GM10248 (cell line): ENCODE measurements at regions of chr6 and their contacts with region 1.

Region 1: DNA sequence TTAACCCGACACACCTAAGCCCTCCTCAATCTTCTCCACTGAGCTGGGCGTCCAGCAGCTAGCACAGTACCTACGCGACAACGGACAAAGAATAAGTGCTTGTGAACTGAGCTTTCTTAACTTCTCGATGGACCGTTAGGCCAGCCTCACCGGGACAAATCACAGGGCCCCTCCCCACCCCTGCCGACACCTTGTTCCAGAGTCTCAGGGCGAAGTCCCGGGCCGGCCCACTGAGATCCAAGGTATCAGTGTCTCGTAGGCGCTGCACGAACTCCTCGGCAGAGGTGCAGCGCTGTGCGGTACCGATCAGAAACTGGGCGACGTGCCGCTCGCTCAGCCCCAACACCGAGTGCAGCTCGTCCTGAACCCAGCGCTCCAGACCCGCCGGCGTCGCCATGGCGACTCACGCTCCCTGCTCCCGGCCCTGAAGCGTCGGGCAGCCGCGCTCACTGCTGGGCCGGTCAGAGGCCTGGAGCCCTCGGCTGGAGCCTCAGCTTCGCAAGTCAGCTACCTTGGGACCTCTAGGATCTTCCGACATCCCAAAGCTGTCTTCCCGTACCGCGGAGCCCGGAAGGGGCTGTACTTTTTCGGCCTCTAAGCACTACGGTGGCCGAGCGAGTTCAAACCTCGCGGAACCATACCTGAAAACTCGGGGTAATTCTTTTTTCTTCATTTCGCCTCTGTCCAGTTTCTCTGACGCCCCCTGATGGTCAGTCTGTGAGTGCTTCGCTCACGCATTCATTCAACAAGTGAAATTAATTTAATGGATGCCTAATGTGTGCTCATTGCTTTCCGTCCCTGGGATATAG is at the start of gene DHX16:
- DNase-seq: peak; percentile 92
- CTCF ChIP-seq: peak; percentile 91

Region 2: GRCh38 chr6:30571075-30571768 is 101.4 kb before region 1 on chr6 and contains the start of gene ABCF1:
- CTCF ChIA-PET with region 1: no interaction called
- POLR2A ChIA-PET with region 1: no interaction called
- DNase-seq: peak; percentile 99
- CTCF ChIP-seq: no peak

Region 3: DNA sequence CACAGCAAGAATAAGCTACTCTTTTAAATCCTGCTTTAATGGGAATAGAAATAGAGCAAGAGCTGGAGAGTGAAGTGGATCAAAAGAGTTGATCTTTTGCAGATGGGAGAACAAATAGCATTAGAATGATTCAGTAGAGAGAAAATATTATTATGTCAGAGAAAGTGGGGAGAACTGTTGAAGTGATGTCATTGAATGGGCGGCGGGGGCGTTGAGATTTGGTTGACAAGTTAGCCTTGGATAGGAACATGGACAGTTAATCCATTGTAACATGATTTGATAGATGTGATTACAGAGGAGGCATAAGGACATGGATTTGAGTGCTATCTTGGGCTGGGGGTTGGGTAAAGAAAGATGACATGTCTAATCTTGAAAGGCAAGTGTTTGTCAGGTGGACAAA is 36.8 kb before region 1 on chr6:
- CTCF ChIA-PET with region 1: no interaction called
- POLR2A ChIA-PET with region 1: no interaction called
- DNase-seq: no peak
- CTCF ChIP-seq: no peak

Region 4: DNA sequence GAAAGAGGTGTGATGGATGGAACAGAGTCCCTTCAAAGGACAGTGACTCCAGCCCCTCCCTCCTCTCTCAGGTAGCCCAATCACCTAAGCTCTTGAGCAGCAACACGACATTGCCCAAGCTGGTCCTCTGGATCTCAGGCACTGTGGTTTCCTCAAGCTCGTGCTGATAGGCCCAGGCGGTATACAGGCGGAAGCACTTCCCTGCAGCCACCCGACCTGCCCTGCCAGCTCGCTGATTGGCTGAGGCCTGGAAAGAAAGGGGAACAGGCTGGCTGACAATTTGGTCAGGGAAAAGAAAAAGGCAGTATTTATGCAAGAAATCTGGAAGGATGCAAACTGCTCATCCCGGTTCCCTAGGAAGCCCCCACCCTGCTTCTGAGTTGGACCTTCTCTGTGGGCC is 16.1 kb before region 1 on chr6:
- CTCF ChIA-PET with region 1: interaction called, 15 read pairs
- POLR2A ChIA-PET with region 1: no interaction called
- DNase-seq: no peak
- CTCF ChIP-seq: no peak